GM12878 (cell line): ENCODE measurements at regions of chr18 and their contacts with region 1.

Region 1: GRCh38 chr18:47215554-47216138 is 35.8 kb downstream of the SKOR2 start:
- DNase-seq: peak; percentile 3
- ATAC-seq: peak; percentile 72
- H3K4me3 ChIP-seq: no peak overlapping the region
- H3K27ac ChIP-seq: no peak overlapping the region
- H3K4me1 ChIP-seq: no peaks in the 10 kb centered on the region
- H3K27me3 ChIP-seq: peaks cover 0 to 7% of the 10 kb centered on the region in 2 experiments; a peak in 1 of 4 replicates
- CTCF ChIP-seq: peak; percentile 55 to 61 (median 60); a peak in 5 of 6 replicates
- EP300 ChIP-seq: no peak
- POLR2A ChIP-seq: no peak
- RAD21 ChIP-seq: peak; percentile 91

Region 2: DNA sequence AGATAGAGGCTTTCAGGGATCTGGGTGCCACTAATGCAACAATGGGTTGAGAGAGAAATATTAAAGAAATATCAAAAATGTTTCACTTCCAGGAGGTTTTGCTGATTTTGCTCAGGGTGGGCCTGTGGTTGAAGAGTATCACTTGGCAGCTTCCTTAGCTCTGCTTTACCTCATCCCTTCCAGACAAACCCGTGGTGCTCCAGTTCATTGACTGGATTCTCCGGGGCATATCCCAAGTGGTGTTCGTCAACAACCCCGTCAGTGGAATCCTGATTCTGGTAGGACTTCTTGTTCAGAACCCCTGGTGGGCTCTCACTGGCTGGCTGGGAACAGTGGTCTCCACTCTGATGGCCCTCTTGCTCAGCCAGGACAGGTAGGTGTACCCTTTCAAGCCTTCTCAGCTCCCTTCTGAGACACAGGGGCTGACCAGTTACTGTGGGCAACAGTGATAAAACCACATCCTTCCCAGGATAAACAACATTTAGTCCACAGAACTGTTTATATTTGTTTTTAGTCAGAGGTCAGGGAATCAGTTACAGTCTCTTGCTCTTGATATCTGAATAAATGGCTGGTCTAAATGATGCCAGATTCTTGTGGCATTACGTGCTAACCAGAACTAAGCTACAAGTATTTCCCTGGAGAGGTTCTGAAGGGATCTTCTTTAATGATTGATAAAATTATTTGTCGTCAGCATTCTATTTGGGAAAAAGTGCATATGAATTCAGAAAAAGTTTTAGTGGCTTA is 1484.6 kb before region 1 on chr18:
- CTCF ChIA-PET with region 1: no interaction called
- POLR2A ChIA-PET with region 1: no interaction called
- RAD21 ChIA-PET with region 1: no interaction called
- SMC1A ChIA-PET with region 1: no interaction called
- in situ Hi-C with region 1: no loop called
- intact Hi-C with region 1: no loop called
- DNase-seq: no peak
- ATAC-seq: no peak
- H3K4me3 ChIP-seq: no peak overlapping the region
- H3K27ac ChIP-seq: no peak overlapping the region
- H3K4me1 ChIP-seq: no peaks in the 10 kb centered on the region
- H3K27me3 ChIP-seq: no peaks in the 10 kb centered on the region; a peak in 2 of 4 replicates
- CTCF ChIP-seq: no peak
- EP300 ChIP-seq: no peak
- POLR2A ChIP-seq: no peak
- RAD21 ChIP-seq: no peak

Region 3: GRCh38 chr18:47163241-47163640 is 52.4 kb before region 1 on chr18:
- CTCF ChIA-PET with region 1: no interaction called
- POLR2A ChIA-PET with region 1: no interaction called
- RAD21 ChIA-PET with region 1: no interaction called
- SMC1A ChIA-PET with region 1: no interaction called
- in situ Hi-C with region 1: no loop called
- intact Hi-C with region 1: no loop called
- DNase-seq: no peak
- ATAC-seq: peak; percentile 93
- H3K4me3 ChIP-seq: 0 out of 2 replicates have a peak overlapping the region, but pooled peaks have one; percentile 7
- H3K27ac ChIP-seq: peak overlapping the region; percentile 17; the same call in 1 of the 2 replicates
- H3K4me1 ChIP-seq: peaks cover 13% of the 10 kb centered on the region
- H3K27me3 ChIP-seq: no peaks in the 10 kb centered on the region
- CTCF ChIP-seq: no peak
- EP300 ChIP-seq: no peak
- POLR2A ChIP-seq: no peak
- RAD21 ChIP-seq: no peak

Region 4: DNA sequence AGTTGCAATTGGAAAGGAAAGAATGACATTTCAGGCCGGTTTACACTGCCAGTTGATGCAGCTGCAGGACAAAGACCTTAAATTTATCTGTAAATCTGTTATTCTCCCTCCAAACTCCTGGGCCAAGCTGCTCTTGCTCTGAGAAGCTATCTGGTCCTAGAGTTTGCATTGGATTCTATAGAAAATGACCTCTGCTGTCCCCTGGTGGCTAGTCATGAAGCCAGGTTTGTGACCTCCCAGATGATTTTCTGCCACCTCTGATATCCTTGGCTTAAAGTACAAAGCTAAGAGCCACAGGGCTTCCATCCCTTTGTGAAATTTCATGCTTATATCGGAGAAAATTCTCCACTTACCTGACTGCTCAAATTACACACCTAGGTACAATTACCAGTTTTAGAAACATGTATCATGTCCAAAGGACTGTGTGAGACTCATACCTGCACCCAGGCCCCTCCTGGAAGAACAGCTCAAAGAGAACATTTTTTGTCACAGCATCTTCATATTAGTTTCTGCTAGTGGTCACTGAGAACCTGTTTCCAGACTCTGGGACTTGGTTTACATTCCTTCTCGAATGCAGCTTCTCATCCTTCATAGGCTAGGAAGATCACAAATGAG is 10.6 kb before region 1 on chr18:
- CTCF ChIA-PET with region 1: interaction called, 20 read pairs
- POLR2A ChIA-PET with region 1: no interaction called
- RAD21 ChIA-PET with region 1: interaction called, 3 read pairs
- SMC1A ChIA-PET with region 1: interaction called, 5 read pairs
- in situ Hi-C with region 1: no loop called
- intact Hi-C with region 1: no loop called
- DNase-seq: no peak
- ATAC-seq: peak; percentile 82
- H3K4me3 ChIP-seq: no peak overlapping the region
- H3K27ac ChIP-seq: no peak overlapping the region
- H3K4me1 ChIP-seq: no peaks in the 10 kb centered on the region
- H3K27me3 ChIP-seq: peaks cover 0 to 1% of the 10 kb centered on the region in 2 experiments; a peak in 3 of 4 replicates
- CTCF ChIP-seq: peak; percentile 86 to 90 (median 89)
- EP300 ChIP-seq: no peak
- POLR2A ChIP-seq: no peak
- RAD21 ChIP-seq: peak; percentile 88

Region 5: DNA sequence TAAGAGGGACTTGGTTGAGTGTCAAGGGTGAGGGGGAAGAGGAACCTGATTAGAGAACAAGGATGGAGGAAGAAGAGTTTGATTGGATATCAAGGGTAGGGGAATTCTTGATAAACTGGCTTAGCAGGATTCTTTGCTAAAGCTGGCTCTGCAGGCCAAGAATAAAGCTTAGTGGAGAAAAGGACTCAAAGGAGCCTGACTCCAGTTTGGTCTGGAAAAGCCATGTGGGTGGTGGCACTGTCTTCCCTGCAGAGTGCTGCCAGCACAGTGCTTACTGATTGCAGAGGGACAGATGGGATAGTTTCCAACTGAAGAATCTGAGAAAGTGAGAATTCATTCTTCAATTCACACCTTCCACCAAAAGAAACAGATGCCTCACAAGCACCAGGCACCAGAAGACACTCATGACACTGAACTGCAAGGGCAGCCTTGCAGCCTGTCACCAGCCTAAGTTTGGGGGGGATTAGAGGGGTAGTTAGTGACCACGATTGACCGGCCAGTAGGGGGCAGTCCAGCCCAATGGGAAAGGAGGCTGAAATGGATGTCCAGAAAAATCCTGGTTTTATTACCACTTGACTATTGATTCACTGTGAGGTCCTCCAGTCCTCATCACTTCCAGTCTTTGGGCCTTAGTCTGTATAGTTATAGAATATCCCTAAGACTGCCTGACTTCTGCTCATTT is 380.3 kb after region 1 on chr18:
- CTCF ChIA-PET with region 1: interaction called, 8 read pairs
- POLR2A ChIA-PET with region 1: no interaction called
- RAD21 ChIA-PET with region 1: interaction called, 3 read pairs
- SMC1A ChIA-PET with region 1: interaction called, 3 read pairs
- in situ Hi-C with region 1: no loop called
- intact Hi-C with region 1: loop called (anchors 1 kb)
- DNase-seq: peak; percentile 8
- ATAC-seq: peak; percentile 78
- H3K4me3 ChIP-seq: no peak overlapping the region
- H3K27ac ChIP-seq: no peak overlapping the region
- H3K4me1 ChIP-seq: no peaks in the 10 kb centered on the region
- H3K27me3 ChIP-seq: peaks cover 0 to 6% of the 10 kb centered on the region in 2 experiments; a peak in 2 of 4 replicates
- CTCF ChIP-seq: peak; percentile 67 to 76 (median 68)
- EP300 ChIP-seq: no peak
- POLR2A ChIP-seq: no peak
- RAD21 ChIP-seq: peak; percentile 84

Region 6: GRCh38 chr18:47748847-47749599 is 533.4 kb after region 1 on chr18:
- CTCF ChIA-PET with region 1: interaction called, 16 read pairs
- POLR2A ChIA-PET with region 1: no interaction called
- RAD21 ChIA-PET with region 1: interaction called, 5 read pairs
- SMC1A ChIA-PET with region 1: interaction called, 4 read pairs
- in situ Hi-C with region 1: loop called (anchors 5 kb)
- intact Hi-C with region 1: loop called (anchors 1 kb)
- DNase-seq: no peak
- ATAC-seq: peak; percentile 97
- H3K4me3 ChIP-seq: no peak overlapping the region
- H3K27ac ChIP-seq: no peak overlapping the region
- H3K4me1 ChIP-seq: no peaks in the 10 kb centered on the region
- H3K27me3 ChIP-seq: no peaks in the 10 kb centered on the region; a peak in 1 of 4 replicates
- CTCF ChIP-seq: peak; percentile 94 to 99 (median 99); a peak in 5 of 6 replicates
- EP300 ChIP-seq: no peak
- POLR2A ChIP-seq: no peak
- RAD21 ChIP-seq: peak; percentile 98

Region 7: GRCh38 chr18:47756364-47757016 is 540.8 kb after region 1 on chr18:
- CTCF ChIA-PET with region 1: interaction called, 16 read pairs
- POLR2A ChIA-PET with region 1: no interaction called
- RAD21 ChIA-PET with region 1: interaction called, 9 read pairs
- SMC1A ChIA-PET with region 1: interaction called, 5 read pairs
- in situ Hi-C with region 1: no loop called
- intact Hi-C with region 1: no loop called
- DNase-seq: no peak
- ATAC-seq: peak; percentile 88
- H3K4me3 ChIP-seq: no peak overlapping the region
- H3K27ac ChIP-seq: no peak overlapping the region
- H3K4me1 ChIP-seq: no peaks in the 10 kb centered on the region
- H3K27me3 ChIP-seq: no peaks in the 10 kb centered on the region; a peak in 1 of 4 replicates
- CTCF ChIP-seq: peak; percentile 88 to 98 (median 94)
- EP300 ChIP-seq: no peak
- POLR2A ChIP-seq: no peak
- RAD21 ChIP-seq: peak; percentile 78